ENCODE measurements at regions of chr16 and their contacts with region 1.

Region 1: GRCh38 chr16:86931399-86931941 is 353.1 kb downstream of the FOXL1 start:
- DNase-seq: peak; percentile 87
- ATAC-seq: peak; percentile 67 to 68

Region 2: DNA sequence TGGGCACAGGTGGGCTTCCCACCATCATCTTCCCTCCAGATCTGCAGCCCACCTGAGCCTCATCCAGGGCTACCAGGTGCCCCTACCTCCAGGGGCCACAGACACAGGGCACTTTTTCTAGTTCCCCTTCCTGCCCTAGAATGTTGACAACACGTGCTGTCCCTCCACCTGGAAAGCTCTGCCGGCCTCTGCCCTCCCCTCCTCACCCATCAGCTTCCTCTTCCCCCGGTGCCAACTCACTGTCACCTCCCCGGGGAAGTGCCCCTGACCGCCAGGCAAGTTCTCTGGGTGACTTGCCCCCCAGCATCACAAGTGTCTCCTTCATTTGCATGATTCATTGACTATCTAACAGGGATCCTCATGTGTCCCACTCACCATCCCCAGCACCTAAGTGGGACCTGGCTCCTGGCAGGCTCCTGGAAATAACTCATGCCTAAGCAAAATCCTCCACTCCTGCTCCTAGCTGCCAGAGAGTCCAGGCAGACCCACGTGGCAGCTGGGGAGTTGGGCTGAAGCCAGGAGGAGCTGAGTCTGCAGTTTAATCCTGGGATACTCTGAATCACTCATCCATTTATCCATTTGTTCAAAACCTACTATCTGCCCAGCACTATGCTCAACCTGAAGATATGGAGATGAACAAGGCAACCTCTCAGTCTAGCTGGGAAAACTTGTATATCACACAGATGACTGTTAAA is 48.7 kb before region 1 on chr16:
- intact Hi-C with region 1: loop called in 1 of 2 experiments (anchors 5 kb)
- DNase-seq: peak; percentile 62
- ATAC-seq: peak; percentile 77 to 90